ENCODE measurements at regions of chr4 and their contacts with region 1.

Region 1: DNA sequence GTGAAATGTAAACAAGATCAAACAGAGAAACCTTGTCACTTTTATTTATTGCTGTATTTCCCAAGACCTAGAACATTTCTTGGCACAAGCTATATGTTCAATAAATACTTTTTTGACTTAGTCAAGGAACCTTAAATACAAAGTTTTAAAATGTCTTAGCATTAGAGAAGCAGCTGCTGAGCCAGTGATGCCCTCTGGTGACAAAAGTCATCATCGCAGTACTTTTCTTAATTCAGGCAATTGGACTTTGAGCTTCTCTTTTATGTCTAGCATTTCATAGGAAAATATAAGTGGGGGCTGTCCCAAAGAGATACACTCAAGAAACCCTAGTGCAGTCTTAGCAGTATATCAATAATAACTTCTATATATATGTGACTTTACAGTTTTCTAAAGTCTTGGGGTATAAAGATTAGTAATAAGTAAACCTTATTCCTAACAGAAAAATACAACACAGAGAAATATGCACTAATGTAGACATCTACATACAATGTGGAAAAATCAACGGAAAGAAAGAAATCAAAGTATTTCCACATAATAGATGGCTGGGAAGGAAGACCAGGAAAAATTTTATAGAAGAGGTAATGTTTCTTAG is 118.4 kb downstream of the DTHD1 start:
- DNase-seq: peak; percentile 61
- H3K4me3 Mint-ChIP-seq: no peak overlapping the region
- H3K27ac Mint-ChIP-seq: no peak overlapping the region
- H3K4me1 Mint-ChIP-seq: peaks cover 17% of the 10 kb centered on the region
- H3K27me3 Mint-ChIP-seq: no peaks in the 10 kb centered on the region

Region 2: GRCh38 chr4:35757836-35758235 is 642.0 kb before region 1 on chr4:
- CTCF ChIA-PET with region 1: no interaction called
- POLR2A ChIA-PET with region 1: no interaction called
- intact Hi-C with region 1: no loop called
- DNase-seq: no peak
- H3K4me3 Mint-ChIP-seq: no peak overlapping the region
- H3K27ac Mint-ChIP-seq: no peak overlapping the region
- H3K4me1 Mint-ChIP-seq: no peaks in the 10 kb centered on the region
- H3K27me3 Mint-ChIP-seq: no peaks in the 10 kb centered on the region

Region 3: GRCh38 chr4:36208893-36209473 is 190.9 kb before region 1 on chr4:
- CTCF ChIA-PET with region 1: interaction called, 10 read pairs
- POLR2A ChIA-PET with region 1: no interaction called
- intact Hi-C with region 1: loop called (anchors 2 kb)
- DNase-seq: peak; percentile 54
- H3K4me3 Mint-ChIP-seq: no peak overlapping the region
- H3K27ac Mint-ChIP-seq: peak overlapping the region; percentile 73
- H3K4me1 Mint-ChIP-seq: peaks cover 52% of the 10 kb centered on the region
- H3K27me3 Mint-ChIP-seq: no peaks in the 10 kb centered on the region

Region 4: DNA sequence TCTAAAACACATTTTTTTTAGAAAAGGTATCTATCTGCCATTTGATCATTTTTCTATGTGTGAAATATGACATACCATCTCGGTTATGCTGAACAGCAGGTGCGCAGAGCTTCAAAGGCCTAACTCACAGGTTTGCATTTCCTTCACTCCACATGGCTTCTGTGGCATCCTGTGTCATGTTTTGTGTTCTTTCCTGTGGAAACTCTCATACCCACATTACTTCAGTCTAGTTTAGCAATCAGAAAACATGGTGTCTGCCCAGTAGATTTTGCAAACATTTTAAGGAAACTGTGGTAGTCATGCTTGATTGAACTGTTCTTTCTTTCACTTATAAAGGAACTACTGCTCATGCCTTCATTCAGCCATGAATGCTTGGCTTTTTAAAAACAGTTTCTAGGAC is 144.3 kb before region 1 on chr4:
- CTCF ChIA-PET with region 1: interaction called, 34 read pairs
- POLR2A ChIA-PET with region 1: no interaction called
- intact Hi-C with region 1: loop called (anchors 1 kb)
- DNase-seq: peak; percentile 75
- H3K4me3 Mint-ChIP-seq: peak overlapping the region; percentile 65
- H3K27ac Mint-ChIP-seq: peak overlapping the region; percentile 95
- H3K4me1 Mint-ChIP-seq: peaks cover 44% of the 10 kb centered on the region
- H3K27me3 Mint-ChIP-seq: no peaks in the 10 kb centered on the region

Region 5: DNA sequence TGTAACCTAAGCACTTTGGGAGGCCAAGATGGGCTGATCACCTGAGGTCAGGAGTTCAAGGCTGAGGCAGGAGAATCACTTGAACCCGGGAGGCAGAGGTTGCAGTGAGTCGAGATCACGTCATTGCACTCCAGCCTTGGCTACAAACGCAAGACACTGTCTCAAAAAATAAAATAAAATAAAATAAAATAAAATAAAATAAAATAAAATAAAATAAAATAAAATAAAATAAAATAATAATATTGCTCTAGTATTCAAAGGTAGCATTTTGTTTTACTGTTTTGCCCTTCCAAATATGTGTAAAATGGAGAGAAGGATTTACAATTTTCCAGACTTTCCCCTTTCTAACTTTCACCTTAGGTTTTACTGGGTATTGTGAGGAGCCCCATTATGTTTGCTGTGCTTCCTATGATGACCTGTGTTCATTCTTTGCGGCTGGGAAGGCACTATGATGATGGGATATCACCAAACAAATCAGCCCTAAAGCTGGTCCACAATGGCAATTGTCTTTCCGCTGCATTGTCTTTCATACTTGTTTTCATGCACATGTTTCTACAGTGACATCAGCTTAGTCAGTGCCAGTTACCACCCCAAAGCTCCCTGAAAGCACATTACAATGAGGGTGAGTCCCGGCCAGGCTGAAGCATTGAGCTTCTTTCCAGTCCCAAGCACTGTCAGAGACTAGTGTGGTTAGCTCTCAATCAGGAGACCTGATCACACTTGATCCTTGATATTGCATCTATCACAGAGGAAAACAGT is 67.7 kb before region 1 on chr4:
- CTCF ChIA-PET with region 1: interaction called, 10 read pairs
- POLR2A ChIA-PET with region 1: no interaction called
- intact Hi-C with region 1: no loop called
- DNase-seq: peak; percentile 57
- H3K4me3 Mint-ChIP-seq: no peak overlapping the region
- H3K27ac Mint-ChIP-seq: peak overlapping the region; percentile 78
- H3K4me1 Mint-ChIP-seq: peaks cover 23% of the 10 kb centered on the region
- H3K27me3 Mint-ChIP-seq: no peaks in the 10 kb centered on the region

Region 6: DNA sequence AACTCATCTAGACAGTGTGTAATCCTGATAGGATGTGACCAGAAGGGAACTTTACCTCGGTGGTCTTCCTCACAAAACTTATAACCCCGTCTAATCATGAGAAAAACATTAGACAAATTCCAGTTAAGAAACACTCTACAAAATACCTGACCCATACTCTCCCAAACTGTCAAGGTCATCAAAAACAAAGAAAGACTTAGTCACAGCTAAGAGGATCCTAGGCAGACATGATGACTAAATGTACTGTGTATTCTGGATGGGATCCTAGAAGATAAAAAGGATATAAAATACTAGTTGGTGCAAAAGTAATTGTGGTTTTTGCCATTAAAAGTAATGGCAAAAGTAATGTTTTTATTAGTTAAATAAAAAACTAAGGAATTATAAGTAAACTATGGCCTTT is 36.8 kb before region 1 on chr4:
- CTCF ChIA-PET with region 1: interaction called, 19 read pairs
- POLR2A ChIA-PET with region 1: no interaction called
- intact Hi-C with region 1: no loop called
- DNase-seq: no peak
- H3K4me3 Mint-ChIP-seq: no peak overlapping the region
- H3K27ac Mint-ChIP-seq: no peak overlapping the region
- H3K4me1 Mint-ChIP-seq: peaks cover 7% of the 10 kb centered on the region
- H3K27me3 Mint-ChIP-seq: no peaks in the 10 kb centered on the region

Region 7: GRCh38 chr4:36385951-36386571 is 13.8 kb before region 1 on chr4:
- CTCF ChIA-PET with region 1: interaction called, 20 read pairs
- POLR2A ChIA-PET with region 1: interaction called, 3 read pairs
- intact Hi-C with region 1: no loop called
- DNase-seq: peak; percentile 46
- H3K4me3 Mint-ChIP-seq: peak overlapping the region; percentile 16
- H3K27ac Mint-ChIP-seq: peak overlapping the region; percentile 63
- H3K4me1 Mint-ChIP-seq: peaks cover 22% of the 10 kb centered on the region
- H3K27me3 Mint-ChIP-seq: no peaks in the 10 kb centered on the region

Region 8: DNA sequence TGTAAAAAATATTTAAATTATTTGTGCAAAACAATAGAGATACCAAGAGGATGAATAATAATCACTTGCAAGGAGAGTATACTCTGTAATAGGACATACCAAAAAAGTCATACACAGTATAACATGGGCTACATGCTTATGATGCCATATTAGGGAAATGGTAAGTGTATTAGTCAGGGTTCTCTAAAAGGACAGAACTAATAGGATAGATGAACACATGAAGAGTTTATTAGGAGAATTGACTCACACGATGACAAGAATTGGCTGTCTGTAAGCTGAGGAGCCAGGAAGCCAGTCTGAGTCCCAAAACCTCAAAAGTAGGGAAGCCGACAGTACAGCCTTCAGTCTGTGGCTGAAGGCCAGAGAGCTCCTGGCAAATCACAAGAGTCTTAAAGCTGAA is 32.7 kb after region 1 on chr4:
- CTCF ChIA-PET with region 1: no interaction called
- POLR2A ChIA-PET with region 1: no interaction called
- intact Hi-C with region 1: no loop called
- DNase-seq: no peak
- H3K4me3 Mint-ChIP-seq: no peak overlapping the region
- H3K27ac Mint-ChIP-seq: no peak overlapping the region
- H3K4me1 Mint-ChIP-seq: no peaks in the 10 kb centered on the region
- H3K27me3 Mint-ChIP-seq: peaks cover 3% of the 10 kb centered on the region

Measured in activated CD4-positive, alpha-beta memory T cell treated with anti-CD3 and anti-CD28 coated beads for 36 hours (primary cell).